ENCODE measurements at regions of chr13 and their contacts with region 1.

Region 1: DNA sequence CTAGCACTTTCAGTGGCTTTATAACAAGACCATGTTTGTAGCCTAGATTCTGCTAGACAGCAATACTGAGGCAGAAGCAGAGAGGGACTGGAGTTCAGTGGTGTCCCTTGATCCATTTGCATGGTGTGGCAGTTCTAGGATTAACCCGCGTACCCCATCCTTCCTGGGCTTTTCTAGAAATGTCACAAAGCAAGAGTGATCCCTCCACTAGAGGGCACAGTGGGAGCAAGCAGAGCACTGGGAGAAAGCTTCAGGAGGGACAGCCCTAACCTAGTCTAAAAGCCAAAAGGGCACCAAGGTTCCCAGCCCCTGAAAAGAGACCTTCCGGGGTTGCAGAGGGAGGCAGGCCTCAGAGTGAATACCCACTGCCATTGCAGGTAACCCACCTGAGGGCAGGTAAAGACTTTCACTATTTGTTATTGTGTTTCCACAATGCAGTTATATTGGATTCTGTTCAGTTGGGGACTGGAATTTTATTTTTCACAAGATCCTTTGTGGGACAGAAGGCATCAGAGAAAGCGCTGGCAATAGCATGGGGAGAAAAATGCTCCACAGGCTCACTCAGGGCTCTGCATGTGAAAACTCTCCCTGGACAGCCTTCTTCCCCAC is 170.6 kb downstream of the FLT1 start:
- DNase-seq: peak; percentile 77
- H3K4me3 ChIP-seq: no peak overlapping the region
- H3K27ac ChIP-seq: no peak overlapping the region
- H3K4me1 ChIP-seq: peaks cover 19% of the 10 kb centered on the region
- H3K27me3 ChIP-seq: no peaks in the 10 kb centered on the region
- CTCF ChIP-seq: peak in 2 of 3 experiments; percentile 42 to 65
- POLR2A ChIP-seq: no peak

Region 2: GRCh38 chr13:27744801-27745200 is 579.5 kb before region 1 on chr13:
- intact Hi-C with region 1: no loop called
- DNase-seq: no peak
- H3K4me3 ChIP-seq: no peak overlapping the region
- H3K27ac ChIP-seq: no peak overlapping the region
- H3K4me1 ChIP-seq: no peaks in the 10 kb centered on the region
- H3K27me3 ChIP-seq: no peaks in the 10 kb centered on the region
- CTCF ChIP-seq: no peak
- POLR2A ChIP-seq: no peak

Region 3: GRCh38 chr13:28138012-28138755 is 186.1 kb before region 1 on chr13 and contains the start of gene PAN3:
- intact Hi-C with region 1: no loop called
- DNase-seq: peak; percentile 91
- H3K4me3 ChIP-seq: peak within 1 kb of the TSS; percentile 95 to 100
- H3K27ac ChIP-seq: peak within 1 kb of the TSS; percentile 99 to 100
- H3K4me1 ChIP-seq: peaks cover 22% of the 10 kb centered on the region
- H3K27me3 ChIP-seq: no peaks in the 10 kb centered on the region
- CTCF ChIP-seq: no peak
- POLR2A ChIP-seq: no peak
- total RNA-seq, gene PAN3: 74.8 to 76.2 TPM

Region 4: GRCh38 chr13:28229522-28230411 is 94.5 kb before region 1 on chr13:
- intact Hi-C with region 1: no loop called
- DNase-seq: no peak
- H3K4me3 ChIP-seq: no peak overlapping the region
- H3K27ac ChIP-seq: no peak overlapping the region
- H3K4me1 ChIP-seq: no peaks in the 10 kb centered on the region
- H3K27me3 ChIP-seq: no peaks in the 10 kb centered on the region
- CTCF ChIP-seq: no peak
- POLR2A ChIP-seq: no peak

Region 5: GRCh38 chr13:28636674-28637317 is 312.5 kb after region 1 on chr13:
- intact Hi-C with region 1: loop called (anchors 10 kb)
- DNase-seq: peak; percentile 67
- H3K4me3 ChIP-seq: no peak overlapping the region
- H3K27ac ChIP-seq: no peak overlapping the region
- H3K4me1 ChIP-seq: no peaks in the 10 kb centered on the region
- H3K27me3 ChIP-seq: no peaks in the 10 kb centered on the region
- CTCF ChIP-seq: peak; percentile 71 to 74 (median 73)
- POLR2A ChIP-seq: no peak

Region 6: DNA sequence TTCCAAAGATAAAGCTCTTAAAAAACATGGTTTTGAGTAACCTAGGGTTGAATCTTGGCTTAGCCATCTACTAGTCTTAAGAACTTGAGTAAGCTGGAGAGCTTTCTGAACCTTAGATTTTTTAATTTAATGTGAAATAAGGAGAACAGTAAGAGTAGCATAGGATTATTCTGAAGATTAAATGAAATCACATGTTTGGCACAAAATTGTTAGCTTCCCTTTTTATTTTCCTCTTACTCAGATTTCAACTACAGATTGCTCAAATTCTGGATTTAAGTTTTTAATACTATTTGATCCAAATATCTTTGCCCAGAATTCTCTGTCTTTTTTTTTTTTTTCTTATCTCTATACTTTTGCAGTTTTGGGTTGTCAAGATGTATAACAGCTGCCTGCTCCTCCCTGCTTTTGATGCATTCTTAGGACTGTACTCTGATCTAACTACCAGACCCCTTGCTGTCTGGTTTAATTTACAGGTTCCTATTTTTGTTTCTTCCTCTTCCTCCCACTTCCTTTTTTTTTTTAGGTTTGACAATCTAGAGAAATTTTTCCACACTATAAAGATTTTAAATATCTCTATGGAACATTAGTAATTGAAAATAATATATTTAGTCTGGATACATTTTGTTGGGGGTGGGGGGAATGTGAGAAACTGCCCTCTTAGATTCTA is 347.0 kb after region 1 on chr13:
- intact Hi-C with region 1: no loop called
- DNase-seq: no peak
- H3K4me3 ChIP-seq: no peak overlapping the region
- H3K27ac ChIP-seq: no peak overlapping the region
- H3K4me1 ChIP-seq: no peaks in the 10 kb centered on the region
- H3K27me3 ChIP-seq: no peaks in the 10 kb centered on the region
- CTCF ChIP-seq: no peak
- POLR2A ChIP-seq: no peak